ENCODE measurements at regions of chr5 and their contacts with region 1.

Region 1: GRCh38 chr5:163695830-163696578 is 190.6 kb downstream of the MAT2B start:
- DNase-seq: peak; percentile 21
- H3K4me3 ChIP-seq: no peak overlapping the region
- CTCF ChIP-seq: peak; percentile 72

Region 2: GRCh38 chr5:163564321-163564938 is 131.6 kb before region 1 on chr5:
- CTCF ChIA-PET with region 1: interaction called, 80 read pairs
- POLR2A ChIA-PET with region 1: no interaction called
- DNase-seq: no peak
- H3K4me3 ChIP-seq: no peak overlapping the region
- CTCF ChIP-seq: peak; percentile 70

Region 3: DNA sequence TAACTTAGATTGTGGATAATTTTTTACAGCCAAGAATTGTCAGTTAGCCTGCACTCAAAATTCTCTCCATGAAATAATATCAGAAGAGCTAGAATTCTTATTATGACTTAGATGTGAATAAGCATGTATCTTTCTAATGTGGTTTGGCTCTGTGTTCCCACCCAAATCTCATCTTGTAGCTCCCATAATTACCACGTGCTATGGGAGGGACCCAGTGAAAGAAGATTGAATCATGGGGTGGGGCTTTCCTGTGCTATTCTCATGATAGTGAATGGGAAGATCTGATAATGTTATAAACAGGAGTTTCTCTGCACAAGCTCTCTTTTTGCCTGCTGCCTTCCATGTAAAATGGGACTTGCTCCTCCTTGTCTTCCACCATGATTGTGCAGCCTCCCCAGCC is 13.8 kb before region 1 on chr5:
- CTCF ChIA-PET with region 1: interaction called, 16 read pairs
- POLR2A ChIA-PET with region 1: no interaction called
- DNase-seq: no peak
- H3K4me3 ChIP-seq: no peak overlapping the region
- CTCF ChIP-seq: no peak

Region 4: DNA sequence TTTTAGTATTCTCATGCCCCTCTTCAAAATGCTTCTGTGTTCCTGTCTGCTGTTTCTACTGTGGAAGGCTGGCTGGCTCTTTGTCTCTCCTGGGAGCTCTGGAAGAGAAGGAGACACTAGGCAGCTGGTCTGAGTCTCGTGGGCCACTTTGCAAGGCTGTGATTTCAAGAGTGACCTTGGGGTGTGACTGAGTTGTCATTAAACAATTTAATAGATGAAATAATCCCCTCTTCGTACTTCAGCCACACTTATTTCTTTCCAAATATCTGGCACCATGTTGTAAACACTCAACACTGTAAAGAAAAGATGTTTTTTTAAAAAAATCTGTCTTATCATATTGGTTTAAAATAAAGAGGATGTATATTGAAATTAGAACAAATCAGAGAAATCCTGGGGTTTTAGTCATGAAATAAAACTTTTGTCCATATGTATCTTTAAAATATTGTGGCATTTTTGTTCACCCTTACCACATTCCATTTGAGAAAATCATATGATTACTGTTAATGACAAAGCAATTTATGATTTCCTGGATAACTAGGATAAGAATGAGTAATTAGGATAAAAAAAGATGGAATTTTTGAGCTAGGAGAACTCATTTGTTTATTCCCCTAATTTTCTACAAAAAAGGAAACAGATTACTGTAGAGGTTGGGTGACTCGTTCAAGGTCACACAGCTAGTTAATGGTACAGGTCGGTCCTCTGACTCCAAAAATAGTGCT is 10.2 kb after region 1 on chr5:
- CTCF ChIA-PET with region 1: interaction called, 10 read pairs
- POLR2A ChIA-PET with region 1: no interaction called
- DNase-seq: peak; percentile 4
- H3K4me3 ChIP-seq: no peak overlapping the region
- CTCF ChIP-seq: no peak

Region 5: GRCh38 chr5:164013077-164013670 is 317.2 kb after region 1 on chr5:
- CTCF ChIA-PET with region 1: interaction called, 19 read pairs
- POLR2A ChIA-PET with region 1: no interaction called
- DNase-seq: no peak
- H3K4me3 ChIP-seq: no peak overlapping the region
- CTCF ChIP-seq: peak; percentile 54

Region 6: GRCh38 chr5:164184158-164184557 is 488.2 kb after region 1 on chr5:
- CTCF ChIA-PET with region 1: no interaction called
- POLR2A ChIA-PET with region 1: no interaction called
- DNase-seq: no peak
- H3K4me3 ChIP-seq: no peak overlapping the region
- CTCF ChIP-seq: no peak